GM12878 (cell line): ENCODE measurements at regions of chr3 and their contacts with region 1.

Region 1: DNA sequence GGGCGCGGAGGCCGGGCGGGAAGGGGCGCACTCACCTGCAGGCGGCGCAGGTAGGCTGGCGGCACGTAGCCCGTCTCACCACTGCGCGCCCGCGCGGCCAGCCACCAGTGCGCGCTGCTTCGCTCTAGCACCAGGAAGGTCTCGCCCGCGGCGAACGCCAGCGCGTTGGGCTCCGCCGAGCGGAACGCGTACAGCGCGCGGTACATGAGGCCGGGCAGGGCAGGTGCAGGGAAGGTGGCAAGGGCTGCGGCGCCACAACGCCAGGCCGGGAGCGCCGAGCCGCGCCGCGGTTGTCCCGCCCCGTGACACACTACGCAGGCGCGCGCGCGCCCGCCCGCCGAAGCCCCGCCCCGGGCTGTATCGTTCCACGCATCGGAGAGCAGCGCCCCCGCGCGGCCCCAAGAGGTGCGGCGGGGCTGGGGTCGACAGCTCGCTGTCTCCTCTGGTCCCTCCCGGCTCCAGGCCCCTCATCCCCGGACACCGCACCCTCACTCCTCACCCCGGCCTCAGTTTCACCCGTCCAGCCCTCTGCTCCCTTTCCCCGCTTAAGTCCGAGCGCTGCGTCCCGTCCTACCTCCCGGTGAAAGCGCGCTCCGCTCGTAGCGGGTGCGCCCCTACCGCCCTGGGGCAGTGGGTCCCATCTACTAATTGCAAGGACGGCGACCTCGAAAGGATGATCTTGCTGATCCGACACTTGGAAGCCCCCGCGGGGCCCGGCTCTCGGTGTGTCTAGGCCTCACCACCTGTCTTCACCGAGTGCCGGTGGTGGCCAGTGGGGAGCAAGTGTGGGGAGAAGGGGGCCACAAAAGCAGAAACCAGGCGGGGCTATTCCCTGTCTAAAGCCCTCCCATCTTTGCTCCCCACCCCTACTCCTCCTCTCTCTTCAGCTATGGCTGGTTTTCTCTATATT is at the start of gene NCKIPSD:
- DNase-seq: peak; percentile 30
- ATAC-seq: peak; percentile 91
- H3K4me3 ChIP-seq: peak within 1 kb of the TSS; percentile 99
- H3K27ac ChIP-seq: peak within 1 kb of the TSS; percentile 79
- H3K4me1 ChIP-seq: peaks cover 8% of the 10 kb centered on the region; the same call in 1 of the 2 replicates
- H3K27me3 ChIP-seq: no peaks in the 10 kb centered on the region
- CTCF ChIP-seq: peak; percentile 68 to 93 (median 84)
- EP300 ChIP-seq: 0 out of 4 replicates have a peak, but pooled peaks of 1 of the 2 experiments have one; percentile 11
- POLR2A ChIP-seq: peak; percentile 89
- RAD21 ChIP-seq: peak; percentile 57
- polyA plus RNA-seq, gene NCKIPSD: 0.93 to 2.9 TPM

Region 2: DNA sequence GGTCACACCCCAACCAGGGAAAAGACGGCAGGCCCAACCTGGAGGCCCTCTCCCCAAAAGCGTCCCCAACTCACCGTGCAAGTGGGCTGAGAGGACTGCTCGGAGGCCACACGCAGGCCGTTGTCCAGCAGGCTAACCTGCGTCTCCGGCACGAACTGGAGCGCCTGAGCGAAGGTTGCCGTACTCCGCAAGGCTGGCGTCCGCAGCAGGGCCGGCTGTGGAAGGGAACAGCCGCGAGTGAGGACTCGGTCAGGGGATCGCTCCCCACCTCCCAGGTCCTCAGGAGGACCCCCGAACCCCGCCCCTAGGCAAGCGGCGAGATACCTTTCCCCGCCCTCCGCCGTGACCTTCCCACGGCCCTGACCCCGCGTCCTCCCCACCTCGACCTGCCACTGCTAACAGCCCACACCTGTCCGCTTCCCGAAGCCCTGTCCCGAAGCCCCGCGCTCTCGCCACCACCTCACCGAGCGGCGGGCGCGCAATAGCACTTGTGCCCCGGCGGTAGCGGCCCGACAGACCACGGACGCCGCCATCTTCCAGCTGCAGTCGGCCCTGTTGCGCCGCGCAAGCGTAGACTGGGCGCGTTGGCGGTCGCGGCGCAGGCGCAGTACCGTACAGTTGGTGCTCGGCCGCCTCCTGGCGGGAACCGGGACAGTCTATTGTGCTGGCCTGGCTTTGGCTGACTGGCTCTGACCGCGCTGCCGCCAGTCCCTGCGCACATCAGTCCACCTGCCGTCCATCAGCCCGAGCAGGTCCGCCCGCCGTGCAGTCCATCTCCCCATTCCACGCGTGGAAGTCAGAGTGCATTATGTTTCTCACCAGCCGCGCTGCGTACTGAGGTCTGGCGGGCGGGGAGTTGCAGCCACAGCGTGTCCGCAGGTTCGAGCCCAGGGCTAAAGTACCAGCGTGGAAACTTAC is 76.5 kb before region 1 on chr3 and contains the start of gene UQCRC1:
- CTCF ChIA-PET with region 1: interaction called, 4 read pairs
- POLR2A ChIA-PET with region 1: no interaction called
- RAD21 ChIA-PET with region 1: no interaction called
- SMC1A ChIA-PET with region 1: no interaction called
- in situ Hi-C with region 1: no loop called
- intact Hi-C with region 1: loop called (anchors 1 kb)
- DNase-seq: peak; percentile 78
- ATAC-seq: peak; percentile 100
- H3K4me3 ChIP-seq: peak within 1 kb of the TSS; percentile 78
- H3K27ac ChIP-seq: peak within 1 kb of the TSS; percentile 85
- H3K4me1 ChIP-seq: peaks cover 9% of the 10 kb centered on the region
- H3K27me3 ChIP-seq: no peaks in the 10 kb centered on the region
- CTCF ChIP-seq: peak; percentile 60 to 89 (median 80)
- EP300 ChIP-seq: no peak; a peak in 1 of 4 replicates
- POLR2A ChIP-seq: peak; percentile 100
- RAD21 ChIP-seq: no peak
- polyA plus RNA-seq, gene UQCRC1: 116 to 188 TPM

Region 3: GRCh38 chr3:48663415-48664312 is 22.2 kb before region 1 on chr3:
- CTCF ChIA-PET with region 1: interaction called, 10 read pairs
- POLR2A ChIA-PET with region 1: interaction called, 4 read pairs
- RAD21 ChIA-PET with region 1: no interaction called
- SMC1A ChIA-PET with region 1: interaction called, 4 read pairs
- in situ Hi-C with region 1: no loop called
- intact Hi-C with region 1: no loop called
- DNase-seq: peak; percentile 89
- ATAC-seq: peak; percentile 94
- H3K4me3 ChIP-seq: peak overlapping the region; percentile 74
- H3K27ac ChIP-seq: peak overlapping the region; percentile 46; the same call in 1 of the 2 replicates
- H3K4me1 ChIP-seq: peaks cover 9% of the 10 kb centered on the region
- H3K27me3 ChIP-seq: peaks cover 0 to 3% of the 10 kb centered on the region in 2 experiments; a peak in 1 of 4 replicates
- CTCF ChIP-seq: peak; percentile 88 to 91 (median 90)
- EP300 ChIP-seq: no peak
- POLR2A ChIP-seq: peak; percentile 72
- RAD21 ChIP-seq: no peak

Region 4: GRCh38 chr3:50235716-50236496 is 1550.0 kb after region 1 on chr3 and contains the start of gene GNAI2:
- CTCF ChIA-PET with region 1: no interaction called
- POLR2A ChIA-PET with region 1: no interaction called
- RAD21 ChIA-PET with region 1: no interaction called
- SMC1A ChIA-PET with region 1: no interaction called
- in situ Hi-C with region 1: no loop called
- intact Hi-C with region 1: no loop called
- DNase-seq: peak; percentile 91
- ATAC-seq: peak; percentile 93
- H3K4me3 ChIP-seq: peak within 1 kb of the TSS; percentile 100
- H3K27ac ChIP-seq: peak within 1 kb of the TSS; percentile 91
- H3K4me1 ChIP-seq: peaks cover 14% of the 10 kb centered on the region
- H3K27me3 ChIP-seq: no peaks in the 10 kb centered on the region
- CTCF ChIP-seq: no peak
- EP300 ChIP-seq: no peak
- POLR2A ChIP-seq: peak; percentile 94
- RAD21 ChIP-seq: no peak
- polyA plus RNA-seq, gene GNAI2: 5.0 to 15.3 TPM